Body of pancreas (tissue), 4 donors: ENCODE measurements at regions of chr5 and their contacts with region 1.

Region 1: GRCh38 chr5:168270000-168270399 is 21.4 kb upstream of the WWC1 start:
- DNase-seq: no peak
- ATAC-seq: no peak
- H3K4me3 ChIP-seq: no peak overlapping the region
- H3K27ac ChIP-seq: peak overlapping the region in 2 of 4 donors; percentile 15 to 50
- H3K4me1 ChIP-seq: peaks cover 19% of the 10 kb centered on the region
- H3K27me3 ChIP-seq: no peaks in the 10 kb centered on the region
- CTCF ChIP-seq: no peak
- POLR2A ChIP-seq: no peak

Region 2: DNA sequence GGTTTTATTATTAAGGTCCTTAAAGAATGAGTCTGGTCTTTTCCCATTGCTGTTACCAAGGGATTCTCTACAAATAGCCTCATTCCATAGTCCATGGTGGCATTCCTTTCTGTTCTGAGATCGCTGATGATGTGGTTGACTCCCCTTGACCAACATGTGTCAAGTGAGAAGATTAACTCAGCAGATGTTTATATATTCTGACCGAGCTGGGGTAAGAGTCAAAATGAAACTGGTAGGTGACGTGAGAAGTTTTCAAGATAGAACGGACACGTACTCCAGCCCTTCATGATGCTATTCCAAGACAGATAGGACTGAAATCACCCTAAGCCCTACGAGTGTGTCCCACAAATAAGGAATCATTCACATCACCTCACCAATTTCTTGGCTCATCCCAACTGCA is 134.1 kb before region 1 on chr5:
- intact Hi-C with region 1: no loop called
- DNase-seq: no peak
- ATAC-seq: no peak
- H3K4me3 ChIP-seq: no peak overlapping the region
- H3K27ac ChIP-seq: no peak overlapping the region
- H3K4me1 ChIP-seq: peaks cover 12% of the 10 kb centered on the region
- H3K27me3 ChIP-seq: no peaks in the 10 kb centered on the region
- CTCF ChIP-seq: no peak
- POLR2A ChIP-seq: no peak

Region 3: GRCh38 chr5:168417731-168418429 is 147.9 kb after region 1 on chr5:
- intact Hi-C with region 1: loop called (anchors 5 kb)
- DNase-seq: no peak
- ATAC-seq: no peak
- H3K4me3 ChIP-seq: no peak overlapping the region
- H3K27ac ChIP-seq: no peak overlapping the region
- H3K4me1 ChIP-seq: no peaks in the 10 kb centered on the region
- H3K27me3 ChIP-seq: no peaks in the 10 kb centered on the region
- CTCF ChIP-seq: no peak
- POLR2A ChIP-seq: no peak

Region 4: DNA sequence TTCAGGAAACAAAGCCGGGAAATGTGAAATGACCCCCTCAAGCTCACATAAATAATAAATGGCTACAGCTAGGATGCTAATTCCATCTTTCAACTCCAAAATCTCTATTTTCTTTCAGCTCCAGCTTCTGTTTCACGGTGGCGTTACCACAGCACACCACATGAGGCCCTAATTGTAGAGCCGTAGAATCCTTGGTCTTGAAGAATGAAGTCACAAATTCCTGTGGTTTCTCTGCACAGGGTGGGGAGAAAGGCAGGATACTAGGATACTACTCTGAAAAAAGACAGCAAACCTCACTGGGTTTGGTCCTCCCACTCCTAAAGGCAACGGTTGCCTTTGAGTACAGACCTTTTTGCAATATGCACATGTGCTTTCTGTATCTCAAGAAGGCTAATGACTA is 202.3 kb after region 1 on chr5:
- intact Hi-C with region 1: loop called (anchors 10 kb)
- DNase-seq: peak in 1 of 4 donors; percentile 18
- ATAC-seq: peak; percentile 30
- H3K4me3 ChIP-seq: no peak overlapping the region
- H3K27ac ChIP-seq: no peak overlapping the region
- H3K4me1 ChIP-seq: no peaks in the 10 kb centered on the region
- H3K27me3 ChIP-seq: no peaks in the 10 kb centered on the region
- CTCF ChIP-seq: no peak
- POLR2A ChIP-seq: no peak